Sciatic nerve (tissue), 2 donors: ENCODE measurements at regions of chrX and their contacts with region 1.

Region 1: DNA sequence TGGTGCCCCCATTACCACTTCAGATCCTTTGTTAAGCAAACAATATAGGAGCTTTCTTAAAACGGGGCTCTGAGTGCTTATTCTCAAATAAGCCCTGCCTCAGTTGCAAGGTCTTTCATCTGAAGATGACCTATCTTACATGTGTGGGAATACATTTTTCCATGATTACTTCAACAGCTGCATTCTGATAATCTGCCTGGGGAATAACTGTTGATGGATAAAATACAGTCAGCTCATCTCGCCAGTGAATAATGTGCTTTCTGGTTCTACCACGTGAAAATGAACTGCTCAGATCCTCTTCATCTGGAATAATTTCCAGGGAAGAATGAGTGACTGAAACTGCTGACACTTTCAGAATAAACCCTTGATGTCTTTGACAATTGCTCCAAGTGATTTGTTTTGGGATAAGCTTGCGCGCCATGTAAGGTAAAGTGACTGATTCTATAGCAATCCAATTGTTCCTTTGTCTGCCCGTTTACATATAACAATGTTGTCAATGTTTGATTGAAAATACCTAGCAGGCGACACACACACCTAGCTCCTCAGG is 161.3 kb downstream of the RTL9 start:
- DNase-seq: no peak
- ATAC-seq: no peak

Region 2: GRCh38 chrX:110462957-110463356 is 57.0 kb before region 1 on chrX:
- intact Hi-C with region 1: no loop called
- DNase-seq: no peak
- ATAC-seq: no peak

Region 3: DNA sequence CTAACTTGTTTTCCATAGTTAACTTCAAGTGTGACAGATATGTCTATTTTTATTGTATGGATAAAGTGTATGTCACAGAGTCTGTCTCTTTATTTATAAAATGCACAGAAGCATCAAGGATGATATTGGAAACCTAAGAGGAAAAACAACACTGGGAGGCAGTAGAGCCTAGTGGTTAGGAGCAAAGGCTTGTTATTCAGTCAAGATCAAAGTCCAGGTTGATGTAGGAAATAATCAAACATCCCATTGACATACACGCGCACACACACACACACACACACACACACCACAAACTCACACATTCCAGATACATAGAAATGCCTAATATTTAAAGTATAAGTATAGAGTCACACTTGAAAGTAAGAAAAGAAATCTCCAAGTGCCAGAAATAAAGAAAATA is 68.9 kb after region 1 on chrX:
- intact Hi-C with region 1: loop called (anchors 2 kb)
- DNase-seq: no peak
- ATAC-seq: no peak

Region 4: GRCh38 chrX:110743679-110744340 is 223.8 kb after region 1 on chrX:
- intact Hi-C with region 1: no loop called
- DNase-seq: no peak
- ATAC-seq: peak; percentile 47